Activated T-helper 1 cell treated with anti-CD3 and anti-CD28 coated beads, Interleukin-12 subunit alpha, Interleukin-12 subunit beta, Interleukin-2, Interleukin-4 antibody, amounts not matched to agents 30 ng/mL and 10 ng/mL and 1 ng/mL, durations not matched to agents 14 hours and 24 hours and 36 hours (primary cell): ENCODE measurements at regions of chr6 and their contacts with region 1.

Region 1: DNA sequence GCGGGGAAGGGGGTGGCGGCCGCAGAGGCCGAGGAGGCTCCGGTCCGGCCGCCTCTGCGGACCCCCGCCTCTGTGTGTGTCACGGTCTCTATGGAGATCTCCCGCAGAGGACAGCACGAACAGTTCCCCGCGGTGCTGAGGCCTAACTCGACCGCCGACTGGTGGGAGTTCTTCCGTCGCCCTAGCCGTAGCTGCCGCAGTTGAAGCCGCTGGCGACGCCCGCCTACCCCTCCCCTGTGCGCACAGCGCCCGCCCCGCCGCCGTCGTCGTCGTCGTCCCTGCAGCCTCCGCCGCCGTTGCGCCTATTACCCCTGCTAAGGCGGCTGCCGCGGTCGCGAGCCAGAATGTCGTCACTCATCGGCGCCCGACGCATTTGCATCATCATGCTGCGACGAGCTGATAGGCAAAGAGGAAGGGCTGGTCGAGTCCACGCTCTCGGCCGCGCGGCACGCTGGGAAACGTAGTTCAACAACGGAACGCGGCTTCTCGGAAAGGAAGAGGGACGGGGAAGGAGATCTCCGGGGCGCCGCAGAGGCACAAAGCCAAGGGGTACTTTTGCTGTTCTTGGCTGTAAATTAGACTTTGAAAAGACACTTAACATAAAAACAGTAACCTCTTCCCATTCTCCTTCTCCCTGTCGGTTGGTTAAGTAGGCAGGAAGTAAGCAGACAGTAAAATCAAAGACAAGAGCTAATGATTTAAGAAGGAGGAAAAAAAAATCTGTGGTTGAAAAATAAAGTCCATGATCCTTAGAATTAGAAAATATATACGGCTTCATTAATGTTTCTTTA is at the start of gene NUP153:
- DNase-seq: peak; percentile 100
- H3K4me3 Mint-ChIP-seq: peak within 1 kb of the TSS; percentile 90
- H3K27ac Mint-ChIP-seq: peak within 1 kb of the TSS; percentile 97
- H3K4me1 Mint-ChIP-seq: peaks cover 45% of the 10 kb centered on the region
- H3K27me3 Mint-ChIP-seq: no peaks in the 10 kb centered on the region
- total RNA-seq, gene NUP153: 106 and 109 TPM in 2 replicates

Region 2: DNA sequence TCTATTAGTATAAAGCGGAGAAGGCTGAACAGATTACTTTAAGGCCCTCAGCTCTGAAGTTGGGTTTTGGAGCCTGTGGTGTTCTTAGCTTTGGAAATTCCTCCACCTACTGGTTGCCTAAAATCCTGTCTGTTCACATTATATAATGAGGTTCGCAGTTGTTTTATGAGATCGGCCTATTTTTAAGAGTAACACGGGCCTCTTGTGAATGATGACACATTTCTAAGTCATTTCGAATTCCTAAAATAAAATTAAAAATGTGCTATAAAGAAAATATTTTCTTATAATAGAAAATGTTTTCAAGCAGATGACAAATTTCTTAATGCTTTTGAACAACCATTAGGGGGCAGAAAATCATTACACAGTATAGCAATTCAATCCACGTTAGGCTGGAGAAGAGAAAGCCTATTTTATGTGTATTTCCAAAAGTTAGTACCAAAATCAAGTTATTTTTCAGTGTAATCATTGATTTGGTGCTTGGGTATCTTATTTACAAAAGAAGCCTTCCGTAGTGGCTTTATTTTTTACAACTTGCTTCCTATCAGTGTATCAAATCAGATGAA is 122.5 kb before region 1 on chr6:
- intact Hi-C with region 1: loop called (anchors 5 kb)
- DNase-seq: no peak
- H3K4me3 Mint-ChIP-seq: no peak overlapping the region
- H3K27ac Mint-ChIP-seq: no peak overlapping the region
- H3K4me1 Mint-ChIP-seq: peaks cover 20% of the 10 kb centered on the region
- H3K27me3 Mint-ChIP-seq: peaks cover 9% of the 10 kb centered on the region

Region 3: DNA sequence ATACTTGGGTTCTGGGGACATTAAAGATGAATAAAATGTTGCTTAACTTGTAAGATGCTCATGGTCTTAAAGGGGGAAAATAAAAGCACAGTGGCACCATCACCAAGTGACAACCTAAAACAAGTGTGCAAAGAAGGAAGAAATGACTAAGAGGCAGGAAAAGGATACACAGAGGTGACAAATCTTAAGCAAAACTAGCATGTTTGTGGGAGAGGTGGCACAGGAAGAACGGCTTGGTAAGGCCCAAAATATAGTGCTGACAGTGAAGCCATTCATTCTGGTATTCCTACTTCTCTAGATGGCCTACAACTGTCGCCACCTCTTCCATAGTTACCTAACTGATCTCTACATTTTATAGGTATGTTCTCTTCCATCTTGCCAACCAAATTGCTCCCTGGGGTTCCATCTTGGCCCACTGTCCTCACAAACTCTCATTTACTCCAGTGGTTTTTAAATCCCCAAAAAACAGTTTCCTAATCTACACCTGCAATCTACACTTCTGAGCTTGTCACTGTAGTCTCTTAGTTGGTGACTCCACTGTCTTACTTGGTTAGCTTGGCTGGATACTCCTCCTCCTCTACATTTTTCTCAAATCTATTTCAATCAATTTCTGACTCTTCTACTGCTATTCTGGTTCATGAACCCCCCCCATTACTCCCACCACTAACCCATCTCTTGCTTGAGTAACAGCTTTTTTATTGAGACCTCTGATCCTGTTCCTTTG is 73.1 kb before region 1 on chr6:
- intact Hi-C with region 1: loop called (anchors 2 kb)
- DNase-seq: peak; percentile 21
- H3K4me3 Mint-ChIP-seq: peak overlapping the region; percentile 13
- H3K27ac Mint-ChIP-seq: peak overlapping the region; percentile 80
- H3K4me1 Mint-ChIP-seq: peaks cover 55% of the 10 kb centered on the region
- H3K27me3 Mint-ChIP-seq: no peaks in the 10 kb centered on the region

Region 4: GRCh38 chr6:17691925-17692538 is 14.7 kb before region 1 on chr6:
- intact Hi-C with region 1: loop called (anchors 1 kb)
- DNase-seq: no peak
- H3K4me3 Mint-ChIP-seq: no peak overlapping the region
- H3K27ac Mint-ChIP-seq: peak overlapping the region; percentile 56
- H3K4me1 Mint-ChIP-seq: peaks cover 25% of the 10 kb centered on the region
- H3K27me3 Mint-ChIP-seq: no peaks in the 10 kb centered on the region

Region 5: DNA sequence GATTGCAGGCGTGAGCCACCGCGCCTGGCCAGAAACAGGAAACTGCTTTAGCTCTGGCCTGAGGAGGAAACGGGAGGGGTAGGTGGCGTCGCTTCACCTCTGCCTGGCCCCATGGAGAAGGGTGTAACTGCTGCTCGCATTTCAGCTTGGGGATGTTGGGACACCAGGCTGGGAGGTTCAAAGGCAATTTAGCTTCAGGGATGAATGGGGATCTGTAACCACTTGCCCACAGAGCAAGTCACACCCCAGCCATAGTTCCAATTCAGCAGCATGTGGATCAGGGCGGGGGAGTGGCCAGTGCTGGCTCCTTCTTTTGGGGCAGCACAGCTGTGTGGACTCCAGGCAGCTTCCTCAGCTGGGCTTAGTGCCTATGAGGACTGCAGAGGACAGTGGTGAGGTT is 34.7 kb after region 1 on chr6:
- intact Hi-C with region 1: no loop called
- DNase-seq: no peak
- H3K4me3 Mint-ChIP-seq: no peak overlapping the region
- H3K27ac Mint-ChIP-seq: no peak overlapping the region
- H3K4me1 Mint-ChIP-seq: no peaks in the 10 kb centered on the region
- H3K27me3 Mint-ChIP-seq: peaks cover 2% of the 10 kb centered on the region

Region 6: DNA sequence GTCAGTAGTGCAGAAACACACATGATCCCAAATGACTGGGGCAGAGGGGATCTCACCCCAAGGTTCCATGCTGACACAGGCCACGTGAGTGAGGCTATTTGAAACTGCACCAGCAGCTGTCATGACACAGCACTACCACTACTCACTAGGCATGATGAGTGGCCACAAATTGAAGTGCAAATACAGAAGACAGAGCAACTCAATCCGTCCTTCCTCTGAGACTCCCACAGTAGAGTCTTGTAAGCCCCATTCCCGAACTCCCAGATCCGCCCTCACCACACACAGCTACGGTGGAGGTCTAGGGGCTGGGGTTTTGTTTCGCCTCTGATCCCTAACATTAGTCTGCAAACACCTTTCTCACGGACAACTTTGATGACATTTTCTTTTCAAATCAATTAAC is 113.3 kb after region 1 on chr6:
- intact Hi-C with region 1: loop called (anchors 1 kb)
- DNase-seq: no peak
- H3K4me3 Mint-ChIP-seq: no peak overlapping the region
- H3K27ac Mint-ChIP-seq: no peak overlapping the region
- H3K4me1 Mint-ChIP-seq: no peaks in the 10 kb centered on the region
- H3K27me3 Mint-ChIP-seq: peaks cover 5% of the 10 kb centered on the region

Region 7: DNA sequence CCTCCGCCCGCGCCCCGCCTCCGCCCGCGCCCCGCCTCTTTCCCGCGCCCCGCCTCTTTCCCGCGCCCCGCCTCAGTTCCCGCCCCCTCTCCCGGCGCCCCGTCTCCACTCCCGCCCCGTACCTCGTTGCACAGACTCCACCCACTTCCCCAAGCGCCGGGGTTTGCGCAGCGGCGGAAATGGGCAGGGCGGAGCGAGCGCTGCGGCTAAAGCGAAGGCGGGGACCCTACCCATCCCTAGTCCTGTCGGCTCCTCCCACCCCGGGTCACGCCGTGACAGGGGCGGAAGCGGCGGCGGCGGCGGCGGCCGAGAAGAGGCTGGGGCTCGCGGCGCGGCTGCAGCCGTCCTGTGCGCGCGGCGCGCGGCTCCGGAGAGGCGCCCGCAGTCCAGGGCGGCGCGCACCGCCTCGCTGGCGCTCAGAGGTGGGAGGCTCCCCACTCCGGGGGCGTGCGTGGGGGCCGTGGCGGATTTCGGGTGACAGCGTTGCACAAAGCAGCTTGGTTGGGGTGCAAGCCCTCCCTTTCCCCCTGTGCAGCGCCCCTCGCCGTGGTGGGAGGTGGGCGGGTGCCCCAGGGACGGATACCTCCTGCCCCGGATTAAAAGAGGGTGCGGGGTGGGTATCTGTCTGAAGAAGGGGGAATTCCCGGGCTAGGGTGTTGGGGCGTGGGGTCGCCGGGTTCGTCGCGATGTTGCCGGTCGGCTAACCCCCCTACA is 448.5 kb after region 1 on chr6 and contains the start of gene KDM1B:
- intact Hi-C with region 1: loop called (anchors 1 kb)
- DNase-seq: peak; percentile 99
- H3K4me3 Mint-ChIP-seq: peak within 1 kb of the TSS; percentile 92
- H3K27ac Mint-ChIP-seq: peak within 1 kb of the TSS; percentile 92
- H3K4me1 Mint-ChIP-seq: peaks cover 24% of the 10 kb centered on the region
- H3K27me3 Mint-ChIP-seq: peaks cover 9% of the 10 kb centered on the region
- total RNA-seq, gene KDM1B: 7.1 and 7.2 TPM in 2 replicates